ENCODE measurements at regions of chrX and their contacts with region 1.

Region 1: GRCh38 chrX:132740316-132741123 is 217.9 kb downstream of the HS6ST2 start:
- DNase-seq: no peak
- H3K4me3 ChIP-seq: no peak overlapping the region
- H3K27ac ChIP-seq: no peak overlapping the region
- H3K4me1 ChIP-seq: peaks cover 0 to 8% (median 2%) of the 10 kb centered on the region in 4 experiments; a peak in 3 of 7 replicates
- H3K27me3 ChIP-seq: peaks cover 1 to 27% (median 14%) of the 10 kb centered on the region in 4 experiments; a peak in 6 of 7 replicates
- CTCF ChIP-seq: peak in 2 of 3 experiments; percentile 47 to 54; a peak in 2 of 4 replicates
- EP300 ChIP-seq: no peak
- POLR2A ChIP-seq: no peak
- RAD21 ChIP-seq: peak; percentile 76 to 83

Region 2: DNA sequence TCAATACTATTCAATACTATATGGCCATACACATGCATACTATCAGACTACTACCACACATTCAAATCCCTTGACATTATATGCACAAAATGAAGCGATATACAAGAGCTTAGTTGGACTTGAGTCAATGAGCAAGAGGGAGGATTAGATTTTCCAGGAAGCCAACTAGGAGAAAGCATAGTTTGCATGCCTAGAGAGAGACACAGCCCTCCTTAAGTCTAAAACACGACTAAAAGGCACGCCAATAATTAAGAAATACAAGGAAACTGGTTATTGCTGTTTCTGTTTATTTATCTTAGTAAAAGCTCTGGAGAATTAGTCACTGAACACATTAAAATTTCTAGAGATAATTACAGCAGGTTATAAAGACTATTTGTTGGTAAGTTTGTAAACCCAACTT is 273.5 kb before region 1 on chrX:
- CTCF ChIA-PET with region 1: no interaction called
- POLR2A ChIA-PET with region 1: no interaction called
- DNase-seq: no peak
- H3K4me3 ChIP-seq: no peak overlapping the region
- H3K27ac ChIP-seq: no peak overlapping the region
- H3K4me1 ChIP-seq: no peaks in the 10 kb centered on the region; a peak in 1 of 7 replicates
- H3K27me3 ChIP-seq: no peaks in the 10 kb centered on the region
- CTCF ChIP-seq: no peak
- EP300 ChIP-seq: no peak
- POLR2A ChIP-seq: no peak
- RAD21 ChIP-seq: no peak

Region 3: DNA sequence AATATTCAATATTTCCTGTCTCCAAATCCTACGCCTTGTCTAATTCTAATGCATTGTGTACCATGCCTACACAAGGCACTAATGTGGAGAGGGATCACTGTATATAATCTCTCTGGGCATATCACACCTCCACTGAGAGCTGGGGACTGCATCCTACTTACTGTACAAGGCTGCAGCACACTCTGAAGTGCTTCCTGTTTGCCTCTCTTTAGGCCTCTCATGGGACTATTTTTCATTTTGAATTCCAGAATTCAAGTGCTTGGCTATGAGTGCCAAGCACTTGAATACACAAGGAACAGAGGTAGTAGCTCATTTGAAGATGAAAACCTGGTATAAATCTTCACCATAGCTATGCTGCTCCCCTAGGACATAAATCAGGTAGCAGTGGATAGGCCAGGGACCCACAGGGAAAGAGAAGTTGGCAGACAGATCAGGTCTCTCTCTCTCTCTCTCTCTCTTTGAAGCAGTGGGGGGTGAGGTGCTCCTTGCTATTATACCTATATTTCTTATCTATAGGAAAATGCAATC is 22.0 kb before region 1 on chrX:
- CTCF ChIA-PET with region 1: no interaction called
- POLR2A ChIA-PET with region 1: no interaction called
- DNase-seq: no peak
- H3K4me3 ChIP-seq: no peak overlapping the region
- H3K27ac ChIP-seq: no peak overlapping the region
- H3K4me1 ChIP-seq: no peaks in the 10 kb centered on the region
- H3K27me3 ChIP-seq: no peaks in the 10 kb centered on the region
- CTCF ChIP-seq: no peak
- EP300 ChIP-seq: no peak
- POLR2A ChIP-seq: no peak
- RAD21 ChIP-seq: no peak

Region 4: GRCh38 chrX:132751063-132751690 is 10.7 kb after region 1 on chrX:
- CTCF ChIA-PET with region 1: interaction called, 10 read pairs
- POLR2A ChIA-PET with region 1: no interaction called
- DNase-seq: no peak
- H3K4me3 ChIP-seq: no peak overlapping the region
- H3K27ac ChIP-seq: no peak overlapping the region
- H3K4me1 ChIP-seq: peaks cover 0 to 13% (median 6%) of the 10 kb centered on the region in 4 experiments; a peak in 3 of 7 replicates
- H3K27me3 ChIP-seq: peaks cover 0 to 3% (median 0%) of the 10 kb centered on the region in 4 experiments; a peak in 2 of 7 replicates
- CTCF ChIP-seq: no peak
- EP300 ChIP-seq: no peak
- POLR2A ChIP-seq: no peak
- RAD21 ChIP-seq: no peak

Region 5: DNA sequence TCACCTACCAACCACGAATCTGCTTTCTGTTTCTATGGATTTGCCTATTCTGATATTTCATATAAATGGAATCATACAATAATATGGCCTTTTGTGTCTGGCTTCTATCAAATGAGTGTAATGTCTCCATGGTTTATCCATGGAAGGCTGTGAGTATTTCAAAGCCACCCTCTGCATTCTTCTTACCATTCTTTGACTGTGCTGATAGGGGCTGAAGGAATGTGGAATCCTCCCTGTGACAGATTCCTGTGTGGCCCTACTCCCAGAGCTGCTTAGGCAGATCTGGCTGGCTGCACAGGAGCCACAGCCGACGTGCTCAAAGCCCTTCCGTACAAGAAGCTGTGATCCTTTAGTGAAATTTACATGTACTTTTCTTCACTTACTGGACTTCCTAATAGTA is 54.7 kb after region 1 on chrX:
- CTCF ChIA-PET with region 1: no interaction called
- POLR2A ChIA-PET with region 1: no interaction called
- DNase-seq: no peak
- H3K4me3 ChIP-seq: no peak overlapping the region
- H3K27ac ChIP-seq: no peak overlapping the region
- H3K4me1 ChIP-seq: no peaks in the 10 kb centered on the region
- H3K27me3 ChIP-seq: no peaks in the 10 kb centered on the region
- CTCF ChIP-seq: no peak
- EP300 ChIP-seq: no peak
- POLR2A ChIP-seq: no peak
- RAD21 ChIP-seq: no peak

Region 6: DNA sequence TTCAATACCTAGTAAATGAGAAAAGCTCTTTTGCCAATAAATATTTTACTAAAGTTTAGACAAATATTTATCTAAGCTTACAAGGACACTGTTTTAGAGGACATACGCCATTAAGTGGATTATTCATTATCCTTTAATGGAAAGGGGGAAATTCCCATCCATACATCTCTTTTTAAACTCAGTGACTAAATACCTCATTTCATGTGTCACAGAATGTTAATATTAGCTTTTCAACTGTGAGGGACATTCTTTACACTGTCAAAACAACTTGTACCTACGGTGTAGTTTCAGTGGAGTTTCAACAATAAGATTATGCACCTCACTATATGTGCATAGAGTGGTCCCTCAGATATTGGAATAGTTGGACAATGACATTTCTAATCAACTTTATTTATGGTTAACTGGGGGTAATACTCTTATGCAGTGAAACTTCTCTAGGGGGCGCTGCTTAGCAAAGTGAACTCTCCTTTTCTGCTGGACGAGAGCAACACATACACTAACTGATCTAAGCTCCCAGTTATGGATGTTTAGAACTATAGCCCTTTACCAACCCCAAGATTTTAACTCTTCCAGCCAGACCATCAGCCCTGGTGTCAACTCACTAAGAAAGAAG is 208.2 kb after region 1 on chrX:
- CTCF ChIA-PET with region 1: interaction called, 10 read pairs
- POLR2A ChIA-PET with region 1: no interaction called
- DNase-seq: no peak
- H3K4me3 ChIP-seq: no peak overlapping the region
- H3K27ac ChIP-seq: no peak overlapping the region
- H3K4me1 ChIP-seq: no peaks in the 10 kb centered on the region; a peak in 1 of 7 replicates
- H3K27me3 ChIP-seq: no peaks in the 10 kb centered on the region
- CTCF ChIP-seq: peak in 2 of 3 experiments; percentile 25 to 61; a peak in 2 of 4 replicates
- EP300 ChIP-seq: no peak
- POLR2A ChIP-seq: no peak
- RAD21 ChIP-seq: peak; percentile 27 to 28; a peak in 2 of 4 replicates

Measured in H1 (cell line).